B cell (primary cell): ENCODE measurements at regions of chr6 and their contacts with region 1.

Region 1: GRCh38 chr6:26012061-26012460 is 49.5 kb downstream of the TRIM38 start:
- DNase-seq: no peak
- ATAC-seq: no peak
- H3K4me3 ChIP-seq: no peak overlapping the region
- H3K4me3 Mint-ChIP-seq: no peak overlapping the region
- H3K27ac ChIP-seq: no peak overlapping the region
- H3K27ac Mint-ChIP-seq: no peak overlapping the region
- H3K4me1 ChIP-seq: peaks cover 0 to under 1% of the 10 kb centered on the region in 2 donors
- H3K4me1 Mint-ChIP-seq: peaks cover under 1% of the 10 kb centered on the region
- H3K27me3 ChIP-seq: no peaks in the 10 kb centered on the region
- H3K27me3 Mint-ChIP-seq: no peaks in the 10 kb centered on the region
- CTCF ChIP-seq: no peak

Region 2: DNA sequence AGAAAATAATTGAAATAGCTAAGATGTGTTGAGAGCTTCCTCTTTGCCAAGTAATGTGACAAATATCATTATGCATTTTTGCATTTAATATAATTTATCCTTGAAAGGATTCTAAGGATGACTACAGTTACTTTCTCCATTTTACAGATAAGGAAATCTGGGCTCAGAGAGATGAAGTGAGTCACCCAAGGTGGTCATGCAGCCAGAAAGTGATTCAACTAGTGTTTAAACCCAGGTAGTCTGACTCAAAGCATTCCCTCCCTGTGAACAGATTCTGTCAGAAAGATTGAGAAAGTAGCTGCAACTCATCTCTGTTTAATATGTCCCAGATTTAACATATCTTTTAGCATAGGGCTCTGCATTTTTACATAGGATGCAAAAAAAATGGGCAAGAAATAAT is 1857.9 kb before region 1 on chr6:
- CTCF ChIA-PET with region 1: no interaction called
- POLR2A ChIA-PET with region 1: interaction called, 10 read pairs
- intact Hi-C with region 1: no loop called
- DNase-seq: no peak
- ATAC-seq: no peak
- H3K4me3 ChIP-seq: no peak overlapping the region
- H3K4me3 Mint-ChIP-seq: no peak overlapping the region
- H3K27ac ChIP-seq: no peak overlapping the region
- H3K27ac Mint-ChIP-seq: no peak overlapping the region
- H3K4me1 ChIP-seq: no peaks in the 10 kb centered on the region
- H3K4me1 Mint-ChIP-seq: no peaks in the 10 kb centered on the region
- H3K27me3 ChIP-seq: peaks cover 0 to 3% (median under 1%) of the 10 kb centered on the region in 4 experiments
- H3K27me3 Mint-ChIP-seq: peaks cover 8% of the 10 kb centered on the region
- CTCF ChIP-seq: no peak